ENCODE measurements at regions of chr22 and their contacts with region 1.

Region 1: GRCh38 chr22:28582806-28583205 is 96.8 kb downstream of the TTC28 start:
- DNase-seq: peak; percentile 61
- H3K4me3 ChIP-seq: no peak overlapping the region
- CTCF ChIP-seq: no peak

Region 2: DNA sequence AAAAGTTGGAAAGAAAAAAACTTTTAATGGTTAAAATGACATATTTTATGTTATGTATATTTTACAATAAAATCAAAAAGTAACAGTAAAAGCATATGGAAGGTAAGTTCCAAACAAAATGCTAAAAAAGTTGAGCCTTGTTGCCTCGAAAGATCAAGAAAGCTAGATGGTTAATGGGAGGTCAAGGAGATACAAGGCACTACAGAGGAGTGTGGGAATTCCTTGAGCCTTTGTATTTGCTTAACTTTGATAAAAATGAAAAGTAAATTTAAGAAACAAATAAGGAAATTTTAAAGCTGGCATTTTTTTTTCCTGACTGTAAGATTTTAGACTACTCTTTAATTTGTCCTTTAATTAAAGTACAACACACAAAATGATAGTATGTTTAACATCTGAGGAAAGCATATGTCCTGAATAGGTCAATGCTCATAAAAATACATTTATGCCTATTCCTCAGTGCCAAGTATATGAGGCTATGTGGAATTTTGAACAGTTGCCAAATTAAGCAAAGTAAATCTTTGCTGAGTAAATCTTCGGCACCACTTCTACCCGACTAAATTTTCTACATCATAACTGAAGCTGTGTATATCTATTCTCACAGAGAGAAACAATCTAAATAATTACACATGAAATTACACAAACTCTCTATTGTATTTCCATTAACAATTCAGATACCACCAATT is 12.0 kb before region 1 on chr22:
- CTCF ChIA-PET with region 1: no interaction called
- POLR2A ChIA-PET with region 1: no interaction called
- DNase-seq: no peak
- H3K4me3 ChIP-seq: no peak overlapping the region
- CTCF ChIP-seq: no peak

Region 3: GRCh38 chr22:28594797-28595462 is 12.1 kb after region 1 on chr22:
- CTCF ChIA-PET with region 1: interaction called, 10 read pairs
- POLR2A ChIA-PET with region 1: no interaction called
- DNase-seq: peak; percentile 31
- H3K4me3 ChIP-seq: no peak overlapping the region
- CTCF ChIP-seq: peak; percentile 44

Region 4: DNA sequence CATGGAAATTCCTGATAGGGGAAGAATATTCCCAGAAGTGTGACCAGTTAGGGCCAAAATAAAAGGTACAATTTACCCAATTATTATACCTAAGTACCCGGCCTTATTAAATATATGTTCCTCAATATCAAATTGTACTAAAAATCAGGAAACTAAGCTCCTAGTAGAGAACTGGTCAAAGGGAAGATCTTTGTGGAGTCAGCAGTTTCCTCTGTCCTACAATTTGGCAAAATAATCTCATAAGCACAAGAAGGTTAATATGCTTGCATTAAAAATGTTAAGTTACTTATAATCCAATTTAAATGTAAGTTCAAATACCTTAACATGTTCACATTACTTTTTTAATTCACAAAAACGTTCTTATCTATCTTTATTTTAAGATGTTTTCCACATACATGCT is 86.6 kb after region 1 on chr22:
- CTCF ChIA-PET with region 1: no interaction called
- POLR2A ChIA-PET with region 1: no interaction called
- DNase-seq: no peak
- H3K4me3 ChIP-seq: no peak overlapping the region
- CTCF ChIP-seq: no peak

Measured in AG04449 (cell line).